Transverse colon (tissue), 4 donors: ENCODE measurements at regions of chr7 and their contacts with region 1.

Region 1: GRCh38 chr7:134695321-134695860 is 48.7 kb downstream of the BPGM start:
- DNase-seq: no peak
- H3K4me3 ChIP-seq: no peak overlapping the region
- H3K27ac ChIP-seq: peak overlapping the region in 2 of 4 donors; percentile 27 to 35
- H3K4me1 ChIP-seq: peaks cover 0 to 6% (median 5%) of the 10 kb centered on the region in 4 donors
- H3K27me3 ChIP-seq: no peaks in the 10 kb centered on the region
- CTCF ChIP-seq: no peak
- EP300 ChIP-seq: no peak
- POLR2A ChIP-seq: no peak

Region 2: DNA sequence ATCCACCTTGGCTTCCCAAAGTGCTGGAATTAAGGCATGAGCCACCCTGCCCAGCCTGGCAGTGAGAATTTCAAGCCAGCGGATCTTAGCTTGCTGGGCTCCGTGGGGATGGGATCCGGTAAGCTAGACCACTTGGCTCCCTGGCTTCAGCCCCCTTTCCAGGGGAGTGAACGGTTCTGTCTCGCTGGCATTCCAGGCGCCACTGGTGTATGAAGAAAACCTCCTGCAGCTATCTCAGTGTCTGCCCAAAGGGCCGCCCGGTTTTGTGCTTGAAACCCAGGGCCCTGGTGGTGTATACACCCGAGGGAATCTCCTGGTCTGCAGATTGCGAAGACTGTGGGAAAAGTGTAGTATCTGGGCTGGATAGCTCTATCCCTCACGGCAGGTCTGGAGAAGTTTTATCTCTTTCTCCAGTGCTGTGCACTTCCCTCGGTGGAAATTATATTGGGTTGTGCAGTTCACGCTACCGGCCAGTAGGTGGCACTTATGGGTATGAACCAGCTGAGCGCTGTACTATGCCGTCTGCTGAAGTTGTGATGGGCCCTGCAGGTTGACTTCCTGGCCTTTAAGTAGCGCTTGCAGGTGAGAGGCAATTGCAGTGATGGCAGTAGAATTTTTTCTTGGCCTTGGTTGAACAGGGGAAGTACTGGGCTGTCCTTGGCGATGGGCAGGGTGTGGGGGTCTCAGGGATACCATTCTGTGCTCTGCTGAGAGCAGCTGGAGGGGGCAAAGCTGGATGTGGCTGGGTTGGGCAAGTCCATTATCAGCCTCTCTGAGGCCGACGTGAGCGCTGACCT is 1419.8 kb after region 1 on chr7:
- in situ Hi-C with region 1: no loop called
- intact Hi-C with region 1: loop called (anchors 5 kb)
- DNase-seq: peak; percentile 28
- H3K4me3 ChIP-seq: no peak overlapping the region
- H3K27ac ChIP-seq: no peak overlapping the region
- H3K4me1 ChIP-seq: no peaks in the 10 kb centered on the region
- H3K27me3 ChIP-seq: no peaks in the 10 kb centered on the region
- CTCF ChIP-seq: peak; percentile 40 to 63 (median 55)
- EP300 ChIP-seq: no peak
- POLR2A ChIP-seq: no peak